Esophagus squamous epithelium (tissue), 5 donors: ENCODE measurements at regions of chr19 and their contacts with region 1.

Region 1: GRCh38 chr19:970695-971094 is 13.4 kb upstream of the WDR18 start:
- DNase-seq: no peak
- H3K4me3 ChIP-seq: no peak overlapping the region
- H3K27ac ChIP-seq: no peak overlapping the region
- H3K4me1 ChIP-seq: no peaks in the 10 kb centered on the region
- H3K27me3 ChIP-seq: no peaks in the 10 kb centered on the region
- CTCF ChIP-seq: peak in 3 of 6 experiments; percentile 25 to 56 (median 30)
- POLR2A ChIP-seq: no peak

Region 2: DNA sequence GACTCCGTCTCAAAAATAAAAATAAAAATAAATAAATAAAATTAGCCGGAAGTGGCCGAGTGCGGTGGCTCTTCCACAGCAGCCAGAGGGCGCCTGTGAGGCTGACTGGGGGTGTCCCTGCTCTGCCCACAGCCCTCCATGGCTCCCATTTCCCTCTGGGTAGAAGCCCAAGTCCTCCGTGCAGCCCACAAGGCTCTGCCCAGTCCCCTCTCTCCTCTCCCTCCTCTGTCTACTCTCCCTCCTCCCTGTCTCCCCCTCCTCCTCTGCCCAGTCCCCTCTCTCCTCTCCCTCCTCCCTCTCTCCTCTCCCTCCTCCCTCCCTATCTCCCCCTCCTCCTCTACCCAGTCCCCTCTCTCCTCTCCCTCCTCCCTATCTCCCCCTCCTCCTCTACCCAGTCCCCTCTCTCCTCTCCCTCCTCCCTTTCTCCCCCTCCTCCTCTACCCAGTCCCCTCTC is 199.3 kb before region 1 on chr19:
- intact Hi-C with region 1: loop called (anchors 10 kb)
- DNase-seq: no peak
- H3K4me3 ChIP-seq: no peak overlapping the region
- H3K27ac ChIP-seq: no peak overlapping the region
- H3K4me1 ChIP-seq: peaks cover 0 to 16% (median 0%) of the 10 kb centered on the region in 3 donors
- H3K27me3 ChIP-seq: peaks cover 0 to 9% (median 0%) of the 10 kb centered on the region in 4 donors
- CTCF ChIP-seq: peak; percentile 19 to 58 (median 46)
- POLR2A ChIP-seq: no peak

Region 3: DNA sequence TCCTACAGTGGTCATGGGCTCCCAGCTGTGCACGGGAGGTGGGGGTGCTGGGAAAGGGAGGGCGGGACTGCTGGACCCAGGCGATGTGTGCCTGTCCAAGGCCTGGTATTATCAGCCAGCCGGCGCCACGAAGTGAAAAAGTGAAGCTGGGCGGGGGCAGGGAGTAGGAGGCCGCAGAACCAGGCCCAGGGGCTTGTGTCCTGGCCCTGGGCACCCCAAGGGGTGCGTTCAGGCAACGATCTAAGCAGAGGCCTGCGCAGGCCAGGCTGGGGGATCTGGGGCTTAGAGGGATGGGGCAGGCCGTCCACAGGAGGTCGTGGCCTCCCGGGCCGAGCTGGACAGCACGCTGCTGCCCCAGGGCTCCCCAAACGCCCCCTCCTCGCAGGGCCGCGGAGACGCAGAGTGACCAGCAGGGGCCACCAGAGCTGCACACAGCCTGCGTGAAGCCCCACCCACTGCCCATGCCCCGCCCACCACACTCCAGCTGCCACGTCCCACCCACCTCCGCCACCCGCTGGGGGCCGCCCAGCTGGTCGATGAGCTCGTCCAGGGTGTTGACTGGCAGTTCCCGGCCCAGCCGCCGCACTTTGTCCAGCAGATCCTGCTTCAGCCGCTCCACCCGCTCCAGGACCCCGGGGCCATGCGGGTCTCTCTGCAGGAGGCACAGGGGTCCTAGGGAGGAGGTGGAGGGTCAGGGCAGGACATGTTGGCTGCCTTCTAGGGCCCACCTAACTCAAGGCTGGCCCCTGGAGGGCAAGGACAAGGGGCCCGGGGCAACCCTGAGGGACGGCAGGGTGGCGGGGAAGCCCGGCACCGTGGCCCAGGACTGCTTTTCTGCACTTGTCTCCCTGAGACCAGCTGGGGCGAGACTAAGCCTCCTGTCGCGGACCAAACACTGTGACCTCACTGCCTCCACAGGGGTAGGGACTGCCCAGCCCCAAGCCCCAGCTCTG is 142.6 kb after region 1 on chr19:
- intact Hi-C with region 1: no loop called
- DNase-seq: peak; percentile 69
- H3K4me3 ChIP-seq: peak overlapping the region in 1 of 4 donors; percentile 22
- H3K27ac ChIP-seq: peak overlapping the region; percentile 73 to 91 (median 84)
- H3K4me1 ChIP-seq: peaks cover 30 to 71% (median 32%) of the 10 kb centered on the region in 3 donors
- H3K27me3 ChIP-seq: no peaks in the 10 kb centered on the region
- CTCF ChIP-seq: peak; percentile 83 to 92 (median 87)
- POLR2A ChIP-seq: peak in 1 of 4 donors; percentile 11